ENCODE measurements at regions of chr10 and their contacts with region 1.

Region 1: GRCh38 chr10:77405771-77406241 is 231.8 kb downstream of the KCNMA1 start:
- DNase-seq: no peak
- H3K4me3 ChIP-seq: no peak overlapping the region
- H3K27ac ChIP-seq: peak overlapping the region; percentile 46
- H3K4me1 ChIP-seq: peaks cover 27% of the 10 kb centered on the region
- H3K27me3 ChIP-seq: no peaks in the 10 kb centered on the region
- CTCF ChIP-seq: no peak
- POLR2A ChIP-seq: no peak

Region 2: DNA sequence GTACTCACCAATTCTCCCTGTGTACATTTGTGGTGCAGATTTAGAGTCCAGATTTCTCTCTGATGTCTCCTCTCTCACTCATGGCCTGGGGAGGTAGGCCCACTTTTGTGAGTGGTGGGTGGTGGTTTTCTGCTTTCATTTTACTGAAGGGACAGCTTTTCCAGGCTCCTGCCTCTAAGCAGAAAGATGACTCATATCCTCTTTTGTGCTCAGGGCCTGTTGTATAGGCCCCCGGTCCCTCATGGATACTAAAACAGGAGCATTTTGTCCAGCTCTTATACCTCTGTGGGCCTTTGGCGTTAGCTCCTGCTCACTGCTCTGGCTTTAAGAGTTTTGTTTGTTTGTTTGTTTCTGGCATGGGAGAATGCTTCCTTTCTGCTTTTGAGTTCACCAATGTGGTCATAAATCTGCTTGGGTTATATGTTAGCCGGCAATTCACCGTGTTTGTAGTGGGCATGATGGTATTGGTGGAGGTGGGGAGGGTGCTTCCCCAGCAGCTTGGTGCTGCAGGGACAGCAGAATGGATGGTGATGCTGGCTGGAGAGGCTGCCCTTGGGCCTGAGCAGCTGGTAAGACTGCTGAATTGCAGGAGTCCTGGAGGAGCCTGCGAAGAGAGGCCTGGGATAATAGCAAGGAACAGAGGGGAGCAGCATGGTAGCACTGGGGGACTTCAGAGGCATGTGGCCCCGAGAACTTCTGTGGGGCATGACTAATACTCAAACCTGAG is 1096.6 kb after region 1 on chr10:
- intact Hi-C with region 1: loop called (anchors 5 kb)
- DNase-seq: no peak
- H3K4me3 ChIP-seq: no peak overlapping the region
- H3K27ac ChIP-seq: peak overlapping the region; percentile 9
- H3K4me1 ChIP-seq: peaks cover 11% of the 10 kb centered on the region
- H3K27me3 ChIP-seq: no peaks in the 10 kb centered on the region
- CTCF ChIP-seq: no peak
- POLR2A ChIP-seq: no peak

Measured in vagina (tissue), 2 donors.